Dorsolateral prefrontal cortex (tissue), 120 donors: ENCODE measurements at regions of chr6 and their contacts with region 1.

Region 1: GRCh38 chr6:42075159-42075838 is 25.0 kb downstream of the TAF8 start:
- DNase-seq: peak; percentile 52 to 78 (median 68)
- H3K4me3 ChIP-seq: no peak overlapping the region
- H3K27ac ChIP-seq: peak overlapping the region in 1 of 59 donors; percentile 27
- H3K27me3 ChIP-seq: no peaks in the 10 kb centered on the region
- CTCF ChIP-seq: peak; percentile 38 to 83 (median 72)

Region 2: DNA sequence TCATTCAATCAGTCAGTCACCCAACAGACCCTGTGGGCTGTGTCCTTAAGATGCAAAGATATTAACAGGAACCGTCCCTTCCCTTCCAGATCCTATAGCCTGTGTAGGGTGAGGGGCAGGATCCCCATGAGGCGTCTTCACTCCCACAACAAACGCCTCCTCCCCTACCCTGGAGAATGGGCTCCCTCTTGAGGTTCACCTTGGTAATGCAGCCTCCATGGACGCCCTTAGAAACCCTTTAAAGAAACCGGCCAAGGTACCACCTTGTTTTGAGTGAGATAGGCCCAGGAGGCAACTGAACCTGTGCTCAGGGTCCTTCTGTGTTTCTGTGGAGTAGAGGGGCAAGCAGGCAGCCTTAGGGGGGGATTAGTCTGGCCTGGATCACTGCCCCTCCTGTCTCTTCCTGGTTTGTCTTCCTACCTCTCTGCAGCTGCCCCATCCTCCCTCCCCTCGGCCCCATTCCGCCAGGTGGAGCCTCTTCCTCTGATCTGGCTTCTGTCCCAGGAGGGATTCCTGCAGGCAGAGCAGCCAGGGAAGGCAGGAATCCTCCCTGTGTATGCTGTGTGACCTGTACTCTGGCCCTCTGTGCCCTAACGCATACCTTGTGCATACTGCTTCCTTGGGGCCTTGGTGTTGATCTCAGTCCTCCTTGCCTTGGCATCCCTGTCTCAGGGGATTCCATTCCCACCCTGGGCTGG is 91.3 kb after region 1 on chr6:
- intact Hi-C with region 1: loop called (anchors 5 to 10 kb)
- DNase-seq: peak in 7 of 10 donors; percentile 23 to 56 (median 50)
- H3K4me3 ChIP-seq: no peak overlapping the region
- H3K27ac ChIP-seq: no peak overlapping the region
- H3K27me3 ChIP-seq: no peaks in the 10 kb centered on the region
- CTCF ChIP-seq: peak; percentile 74 to 94 (median 85)

Region 3: DNA sequence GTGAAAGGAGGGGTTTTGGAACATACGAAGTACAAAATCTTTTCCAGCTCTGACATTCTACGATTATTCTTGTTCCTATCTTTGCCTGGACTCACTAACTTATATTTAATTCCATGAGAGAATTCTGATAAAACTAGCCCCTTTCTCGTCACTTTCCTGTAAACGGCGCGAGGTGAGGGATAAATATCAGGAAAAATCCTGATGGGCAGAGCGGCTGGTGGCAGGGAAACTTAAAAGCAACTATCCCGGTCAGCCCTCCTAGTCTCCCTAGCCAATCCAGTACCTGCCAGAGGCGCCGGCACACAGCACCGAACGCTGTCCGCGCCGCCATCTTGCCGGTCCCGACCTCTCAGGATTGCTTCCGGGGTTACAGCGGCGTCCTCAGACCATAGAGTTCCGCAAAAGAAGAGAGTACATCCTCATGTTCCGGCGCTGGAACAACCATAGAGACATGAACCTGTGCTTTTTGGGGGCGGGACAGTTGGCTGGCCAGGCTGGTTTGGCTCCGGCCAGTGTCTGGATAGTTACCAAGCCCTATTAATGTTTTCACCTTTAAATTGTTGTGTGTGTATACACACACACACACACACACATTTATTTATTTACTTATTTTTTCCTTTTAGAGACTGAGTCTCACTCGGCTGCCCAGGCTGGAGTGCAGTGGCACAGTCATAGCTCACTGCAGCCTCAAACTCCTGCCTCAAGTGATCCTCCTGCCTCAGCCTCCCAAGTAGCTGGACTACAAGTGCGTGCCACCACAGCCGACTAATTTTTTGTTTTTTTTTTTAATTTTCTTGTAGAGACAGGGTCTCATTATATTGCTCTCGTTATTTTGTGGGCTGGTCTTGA is 142.4 kb after region 1 on chr6 and contains the start of gene MRPS10:
- intact Hi-C with region 1: loop called in 1 of 2 experiments (anchors 2 kb)
- DNase-seq: peak; percentile 87 to 96 (median 92)
- H3K4me3 ChIP-seq: peak within 1 kb of the TSS; percentile 54 to 97 (median 80)
- H3K27ac ChIP-seq: peak within 1 kb of the TSS in 54 of 59 donors; percentile 2 to 88 (median 68)
- H3K27me3 ChIP-seq: no peaks in the 10 kb centered on the region
- CTCF ChIP-seq: peak in 52 of 56 donors; percentile 15 to 75 (median 49)
- total RNA-seq, gene MRPS10: 18.8 to 41.4 (median 29.6) TPM